ENCODE measurements at regions of chr13 and their contacts with region 1.

Region 1: DNA sequence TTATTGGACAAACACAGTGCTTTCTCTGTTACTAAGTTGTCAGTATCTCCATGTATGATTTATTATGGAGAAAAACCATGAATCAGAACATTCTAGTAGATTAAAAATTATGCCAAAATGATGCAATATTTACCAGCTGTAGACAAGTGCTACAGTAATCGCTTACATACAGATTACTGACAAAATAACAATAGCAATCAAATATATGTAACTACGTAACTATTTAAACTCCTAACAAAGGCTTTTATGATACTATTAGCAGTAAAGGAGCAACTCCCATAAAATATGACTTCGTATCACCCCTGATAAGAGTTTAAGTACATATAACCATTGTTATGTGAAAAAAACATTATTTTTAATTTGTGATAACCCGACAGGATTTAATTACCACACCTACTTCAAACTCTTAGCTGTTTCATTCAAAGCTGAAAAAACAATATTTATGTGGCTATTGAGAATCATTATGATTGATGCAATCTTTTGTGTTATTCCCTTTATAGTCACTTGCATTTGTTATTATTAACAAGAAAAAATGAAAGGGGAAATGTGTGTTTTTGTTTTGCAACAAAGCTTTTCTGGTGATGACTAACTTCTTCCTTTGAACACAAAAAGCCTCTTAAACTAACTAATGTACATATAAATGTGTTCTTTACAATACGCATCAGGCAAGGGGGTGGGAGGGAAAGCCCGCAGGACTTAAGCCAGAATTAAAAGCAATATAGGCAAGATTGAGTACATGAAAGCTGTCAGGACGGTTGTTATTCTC is 147.4 kb downstream of the ABCC4 start:
- DNase-seq: no peak
- H3K4me3 ChIP-seq: no peak overlapping the region
- H3K27ac ChIP-seq: no peak overlapping the region
- H3K4me1 ChIP-seq: no peaks in the 10 kb centered on the region
- H3K27me3 ChIP-seq: no peaks in the 10 kb centered on the region
- CTCF ChIP-seq: no peak

Region 2: DNA sequence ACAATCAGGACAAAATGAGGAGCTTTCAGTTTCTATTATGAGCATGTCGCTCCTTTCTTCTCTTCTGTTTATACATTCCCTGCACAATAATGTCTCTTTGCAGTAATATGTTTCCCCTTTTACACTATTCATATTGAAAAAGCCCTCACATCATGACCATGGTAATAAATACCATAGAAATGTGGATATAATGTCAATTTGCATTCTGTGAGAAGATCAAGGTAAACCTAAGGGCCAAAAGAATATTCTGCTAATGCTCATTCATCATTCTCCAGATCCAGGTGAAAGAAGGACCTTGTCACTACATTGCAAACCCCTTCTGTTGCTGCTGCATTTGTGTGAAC is 324.0 kb before region 1 on chr13:
- intact Hi-C with region 1: loop called (anchors 5 kb)
- DNase-seq: no peak
- H3K4me3 ChIP-seq: no peak overlapping the region
- H3K27ac ChIP-seq: no peak overlapping the region
- H3K4me1 ChIP-seq: no peaks in the 10 kb centered on the region
- H3K27me3 ChIP-seq: no peaks in the 10 kb centered on the region
- CTCF ChIP-seq: no peak